SK-N-SH (cell line): ENCODE measurements at regions of chr11 and their contacts with region 1.

Region 1: DNA sequence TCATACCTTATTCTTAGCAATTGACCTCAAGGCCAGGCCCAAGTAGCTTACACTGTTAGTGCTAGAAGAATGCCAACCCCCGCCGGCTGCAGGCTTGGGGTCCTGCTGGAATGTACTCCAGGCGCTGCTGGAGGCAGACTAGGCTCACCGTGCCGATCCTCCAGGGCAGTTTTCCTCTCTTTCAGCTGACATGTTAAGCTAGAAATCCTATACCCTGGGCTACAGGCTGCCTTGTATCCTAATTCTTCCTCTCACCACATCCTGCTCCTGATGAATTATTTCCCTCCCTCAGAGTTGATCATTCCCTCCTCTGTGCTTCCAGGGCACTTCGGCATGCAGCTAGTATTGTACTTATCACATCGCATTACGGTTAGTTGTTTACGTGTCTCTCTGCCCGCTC is 3.4 kb downstream of the SPTBN2 start:
- DNase-seq: no peak
- H3K4me3 ChIP-seq: no peak overlapping the region
- H3K27ac ChIP-seq: no peak overlapping the region
- H3K4me1 ChIP-seq: peaks cover under 1 to 26% of the 10 kb centered on the region in 2 experiments; a peak in 2 of 4 replicates
- H3K27me3 ChIP-seq: no peaks in the 10 kb centered on the region
- CTCF ChIP-seq: no peak
- EP300 ChIP-seq: no peak
- RAD21 ChIP-seq: no peak

Region 2: GRCh38 chr11:66834501-66834845 is 108.8 kb after region 1 on chr11:
- CTCF ChIA-PET with region 1: interaction called, 10 read pairs
- POLR2A ChIA-PET with region 1: no interaction called
- DNase-seq: no peak
- H3K4me3 ChIP-seq: no peak overlapping the region
- H3K27ac ChIP-seq: no peak overlapping the region
- H3K4me1 ChIP-seq: peaks cover 0 to 5% of the 10 kb centered on the region in 2 experiments; a peak in 1 of 4 replicates
- H3K27me3 ChIP-seq: no peaks in the 10 kb centered on the region
- CTCF ChIP-seq: no peak
- EP300 ChIP-seq: no peak
- RAD21 ChIP-seq: no peak